CD8-positive, alpha-beta memory T cell (primary cell): ENCODE measurements at regions of chr20 and their contacts with region 1.

Region 1: GRCh38 chr20:38790200-38791053 is 15.1 kb upstream of the PPP1R16B start:
- DNase-seq: peak; percentile 24 to 69 (median 37)
- H3K4me3 ChIP-seq: no peak overlapping the region
- H3K4me3 Mint-ChIP-seq: peak overlapping the region in 4 of 7 donors; percentile 44 to 77 (median 62)
- H3K27ac ChIP-seq: no peak overlapping the region
- H3K27ac Mint-ChIP-seq: peak overlapping the region in 4 of 8 donors; percentile 62 to 95 (median 82)
- H3K4me1 ChIP-seq: peaks cover 5% of the 10 kb centered on the region
- H3K4me1 Mint-ChIP-seq: peaks cover 10 to 18% (median 11%) of the 10 kb centered on the region in 3 donors
- H3K27me3 ChIP-seq: no peaks in the 10 kb centered on the region
- H3K27me3 Mint-ChIP-seq: peaks cover 0 to 2% of the 10 kb centered on the region in 2 donors

Region 2: GRCh38 chr20:38779247-38780097 is 11.0 kb before region 1 on chr20:
- CTCF ChIA-PET with region 1: interaction called, 15 read pairs
- POLR2A ChIA-PET with region 1: no interaction called
- DNase-seq: no peak
- H3K4me3 ChIP-seq: no peak overlapping the region
- H3K4me3 Mint-ChIP-seq: peak overlapping the region in 2 of 7 donors; percentile 41 to 51
- H3K27ac ChIP-seq: no peak overlapping the region
- H3K27ac Mint-ChIP-seq: peak overlapping the region in 3 of 8 donors; percentile 9 to 29 (median 25)
- H3K4me1 ChIP-seq: no peaks in the 10 kb centered on the region
- H3K4me1 Mint-ChIP-seq: peaks cover 0 to 15% (median 11%) of the 10 kb centered on the region in 3 donors
- H3K27me3 ChIP-seq: no peaks in the 10 kb centered on the region
- H3K27me3 Mint-ChIP-seq: no peaks in the 10 kb centered on the region

Region 3: GRCh38 chr20:38883081-38883980 is 92.9 kb after region 1 on chr20:
- CTCF ChIA-PET with region 1: interaction called, 13 read pairs
- POLR2A ChIA-PET with region 1: no interaction called
- DNase-seq: peak in 1 of 5 donors; percentile 57
- H3K4me3 ChIP-seq: no peak overlapping the region
- H3K4me3 Mint-ChIP-seq: peak overlapping the region in 5 of 7 donors; percentile 52 to 84 (median 71)
- H3K27ac ChIP-seq: peak overlapping the region; percentile 18
- H3K27ac Mint-ChIP-seq: peak overlapping the region; percentile 87 to 99 (median 95)
- H3K4me1 ChIP-seq: peaks cover 23% of the 10 kb centered on the region
- H3K4me1 Mint-ChIP-seq: peaks cover 61 to 88% (median 70%) of the 10 kb centered on the region in 3 donors
- H3K27me3 ChIP-seq: no peaks in the 10 kb centered on the region
- H3K27me3 Mint-ChIP-seq: peaks cover 0 to 2% of the 10 kb centered on the region in 2 donors

Region 4: GRCh38 chr20:38919683-38920082 is 129.3 kb after region 1 on chr20:
- CTCF ChIA-PET with region 1: no interaction called
- POLR2A ChIA-PET with region 1: no interaction called
- DNase-seq: no peak
- H3K4me3 ChIP-seq: no peak overlapping the region
- H3K4me3 Mint-ChIP-seq: no peak overlapping the region
- H3K27ac ChIP-seq: no peak overlapping the region
- H3K27ac Mint-ChIP-seq: peak overlapping the region in 1 of 8 donors; percentile 94
- H3K4me1 ChIP-seq: no peaks in the 10 kb centered on the region
- H3K4me1 Mint-ChIP-seq: peaks cover 0 to under 1% (median 0%) of the 10 kb centered on the region in 3 donors
- H3K27me3 ChIP-seq: no peaks in the 10 kb centered on the region
- H3K27me3 Mint-ChIP-seq: no peaks in the 10 kb centered on the region